A673 (cell line): ENCODE measurements at regions of chr6 and their contacts with region 1.

Region 1: GRCh38 chr6:127266178-127266891 is at the start of gene RNF146:
- DNase-seq: peak; percentile 91
- H3K4me3 ChIP-seq: peak within 1 kb of the TSS; percentile 98
- H3K27ac ChIP-seq: peak within 1 kb of the TSS; percentile 95
- H3K4me1 ChIP-seq: peaks cover 12% of the 10 kb centered on the region
- H3K27me3 ChIP-seq: no peaks in the 10 kb centered on the region
- CTCF ChIP-seq: peak; percentile 85
- total RNA-seq, gene RNF146: 21.7 and 22.6 TPM in 2 replicates

Region 2: DNA sequence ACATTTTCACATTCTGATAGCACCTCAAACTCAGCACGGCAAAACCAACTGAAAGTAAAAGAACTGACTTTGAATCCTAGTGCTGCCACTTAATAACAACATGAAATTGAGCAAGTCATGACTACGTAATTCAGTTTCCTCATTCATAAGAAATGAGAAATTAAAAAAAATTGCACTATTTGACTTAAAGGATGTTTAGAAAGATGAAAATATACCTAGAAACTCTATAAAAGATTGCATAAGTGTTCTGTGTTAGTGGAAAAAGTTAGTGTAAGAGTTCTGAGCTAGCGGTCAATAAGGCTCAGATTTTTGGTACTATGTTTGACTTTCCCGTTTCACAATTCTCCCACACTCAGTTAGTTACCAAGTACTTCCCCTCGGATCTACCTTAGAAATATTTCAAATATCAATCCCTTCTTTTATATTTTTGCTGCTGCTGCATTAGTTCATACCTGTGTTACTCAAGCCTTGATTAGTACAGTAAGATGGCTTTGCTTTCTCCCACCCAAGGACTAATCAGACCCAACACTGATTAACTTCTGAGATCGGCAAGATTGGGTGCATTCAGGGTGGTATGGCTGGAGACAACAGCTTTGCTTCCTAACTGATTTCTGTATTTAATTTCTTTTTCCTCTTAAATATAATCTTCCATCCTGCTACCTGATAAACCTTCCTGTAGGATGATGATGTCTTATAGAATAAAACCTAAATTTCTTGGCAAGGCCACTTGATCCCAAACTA is 51.2 kb after region 1 on chr6:
- CTCF ChIA-PET with region 1: interaction called, 19 read pairs
- POLR2A ChIA-PET with region 1: no interaction called
- intact Hi-C with region 1: no loop called
- DNase-seq: no peak
- H3K4me3 ChIP-seq: no peak overlapping the region
- H3K27ac ChIP-seq: no peak overlapping the region
- H3K4me1 ChIP-seq: no peaks in the 10 kb centered on the region
- H3K27me3 ChIP-seq: no peaks in the 10 kb centered on the region
- CTCF ChIP-seq: no peak

Region 3: DNA sequence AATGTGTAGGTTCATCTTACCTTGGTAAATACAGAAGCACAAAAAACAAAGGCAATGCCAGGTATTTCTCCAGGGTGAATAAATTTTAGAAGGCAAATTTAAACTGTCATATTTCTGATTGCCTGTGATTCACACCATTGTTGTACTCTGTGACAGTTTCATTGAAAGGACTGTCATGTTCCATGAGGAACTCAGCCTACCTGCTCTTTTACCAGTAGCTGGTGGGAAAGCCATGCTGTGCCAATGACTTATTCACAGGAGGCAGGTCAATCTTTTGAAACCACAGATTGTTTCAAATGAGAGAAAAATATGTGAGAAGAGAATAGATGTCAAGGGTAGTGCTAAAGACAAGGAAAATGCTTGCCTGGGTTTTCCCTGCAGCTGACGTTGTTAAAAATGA is 1823.0 kb after region 1 on chr6:
- CTCF ChIA-PET with region 1: interaction called, 10 read pairs
- POLR2A ChIA-PET with region 1: no interaction called
- intact Hi-C with region 1: no loop called
- DNase-seq: no peak
- H3K4me3 ChIP-seq: no peak overlapping the region
- H3K27ac ChIP-seq: no peak overlapping the region
- H3K4me1 ChIP-seq: no peaks in the 10 kb centered on the region
- H3K27me3 ChIP-seq: no peaks in the 10 kb centered on the region
- CTCF ChIP-seq: no peak